ENCODE measurements at regions of chr3 and their contacts with region 1.

Region 1: GRCh38 chr3:71710906-71711494 is 14.2 kb downstream of the EIF4E3 start:
- DNase-seq: peak in 7 of 9 donors; percentile 32 to 57 (median 40)
- ATAC-seq: peak; percentile 81
- H3K4me3 ChIP-seq: no peak overlapping the region
- H3K4me3 Mint-ChIP-seq: peak overlapping the region in 5 of 10 donors; percentile 6 to 48 (median 32)
- H3K27ac ChIP-seq: no peak overlapping the region
- H3K27ac Mint-ChIP-seq: peak overlapping the region in 8 of 9 donors; percentile 4 to 80 (median 62)
- H3K4me1 ChIP-seq: peaks cover 19 to 29% of the 10 kb centered on the region in 2 donors
- H3K4me1 Mint-ChIP-seq: peaks cover 40 to 91% (median 53%) of the 10 kb centered on the region in 7 donors
- H3K27me3 ChIP-seq: no peaks in the 10 kb centered on the region
- H3K27me3 Mint-ChIP-seq: no peaks in the 10 kb centered on the region

Region 2: DNA sequence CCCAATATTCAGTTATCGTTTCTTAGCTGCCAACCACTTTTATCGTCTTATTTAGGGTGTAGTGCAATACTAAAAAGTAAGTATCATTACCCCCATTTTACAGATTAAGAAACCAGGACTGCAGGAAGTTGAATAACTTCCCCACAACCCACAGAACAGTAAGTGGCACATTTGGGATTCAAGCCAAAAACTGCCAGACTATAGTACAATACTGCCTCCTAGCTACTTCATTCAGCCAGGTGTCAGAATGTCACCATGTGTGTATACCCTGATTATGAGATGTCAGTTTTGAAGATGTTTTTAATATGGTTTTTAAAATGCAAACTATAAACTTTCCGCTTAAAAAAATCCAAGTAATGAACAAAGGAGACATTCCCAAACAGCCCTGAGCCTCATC is 148.1 kb after region 1 on chr3:
- CTCF ChIA-PET with region 1: interaction called, 3 read pairs
- POLR2A ChIA-PET with region 1: no interaction called
- intact Hi-C with region 1: loop called (anchors 1 kb)
- DNase-seq: peak in 5 of 9 donors; percentile 25 to 61 (median 47)
- ATAC-seq: peak; percentile 91
- H3K4me3 ChIP-seq: no peak overlapping the region
- H3K4me3 Mint-ChIP-seq: no peak overlapping the region
- H3K27ac ChIP-seq: no peak overlapping the region
- H3K27ac Mint-ChIP-seq: no peak overlapping the region
- H3K4me1 ChIP-seq: peaks cover 0 to 3% of the 10 kb centered on the region in 2 donors
- H3K4me1 Mint-ChIP-seq: peaks cover 0 to 8% (median 5%) of the 10 kb centered on the region in 7 donors
- H3K27me3 ChIP-seq: no peaks in the 10 kb centered on the region
- H3K27me3 Mint-ChIP-seq: peaks cover 22 to 32% (median 29%) of the 10 kb centered on the region in 5 donors

Region 3: DNA sequence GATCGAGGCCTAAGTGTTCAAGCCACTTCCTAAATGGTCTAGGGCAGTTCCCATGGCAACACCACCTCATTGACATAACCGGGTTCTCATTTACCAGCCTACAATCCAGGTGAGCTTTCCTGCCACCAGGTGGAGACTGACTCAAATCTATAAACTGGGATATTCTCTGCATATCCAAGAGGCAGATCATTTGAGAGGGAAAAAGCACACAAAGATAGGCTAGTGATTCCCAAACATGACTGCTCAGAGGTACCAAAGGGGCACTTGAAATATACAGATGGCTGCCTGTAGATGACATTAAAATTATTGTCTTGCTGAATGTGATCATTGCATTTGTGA is 215.2 kb after region 1 on chr3:
- CTCF ChIA-PET with region 1: no interaction called
- POLR2A ChIA-PET with region 1: no interaction called
- intact Hi-C with region 1: loop called in 1 of 2 experiments (anchors 5 kb)
- DNase-seq: peak in 4 of 9 donors; percentile 10 to 35 (median 15)
- ATAC-seq: no peak
- H3K4me3 ChIP-seq: no peak overlapping the region
- H3K4me3 Mint-ChIP-seq: no peak overlapping the region
- H3K27ac ChIP-seq: no peak overlapping the region
- H3K27ac Mint-ChIP-seq: peak overlapping the region in 1 of 9 donors; percentile 18
- H3K4me1 ChIP-seq: no peaks in the 10 kb centered on the region
- H3K4me1 Mint-ChIP-seq: peaks cover 0 to 5% (median 0%) of the 10 kb centered on the region in 7 donors
- H3K27me3 ChIP-seq: no peaks in the 10 kb centered on the region
- H3K27me3 Mint-ChIP-seq: peaks cover 0 to 4% (median 0%) of the 10 kb centered on the region in 5 donors

Region 4: DNA sequence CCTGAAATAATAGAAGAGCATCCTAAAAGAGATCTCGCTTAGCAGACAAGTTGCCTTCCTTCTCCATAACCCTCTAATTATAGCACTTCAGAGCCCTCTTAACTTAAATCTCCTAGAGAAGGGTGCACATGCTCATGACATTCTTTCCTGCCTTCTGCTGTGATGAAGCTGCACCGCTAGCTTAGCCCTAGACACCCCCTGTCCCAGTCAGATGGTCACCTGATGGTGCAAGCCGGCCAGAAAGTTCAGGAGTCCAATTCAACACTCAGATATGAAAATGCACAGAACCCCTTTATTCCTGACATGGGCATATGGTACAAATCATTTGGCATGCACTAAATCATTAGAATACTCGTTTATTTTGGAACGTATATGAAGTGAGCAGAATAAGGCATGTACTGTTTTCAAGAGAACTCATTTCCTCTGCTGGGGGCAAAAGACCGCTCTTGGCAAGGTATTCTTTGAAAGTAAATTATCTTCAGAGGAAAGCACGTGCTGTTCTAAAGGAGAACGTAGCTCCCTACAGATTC is 494.4 kb after region 1 on chr3:
- CTCF ChIA-PET with region 1: no interaction called
- POLR2A ChIA-PET with region 1: no interaction called
- intact Hi-C with region 1: no loop called
- DNase-seq: no peak
- ATAC-seq: no peak
- H3K4me3 ChIP-seq: no peak overlapping the region
- H3K4me3 Mint-ChIP-seq: no peak overlapping the region
- H3K27ac ChIP-seq: no peak overlapping the region
- H3K27ac Mint-ChIP-seq: no peak overlapping the region
- H3K4me1 ChIP-seq: no peaks in the 10 kb centered on the region
- H3K4me1 Mint-ChIP-seq: peaks cover 0 to 1% (median 0%) of the 10 kb centered on the region in 7 donors
- H3K27me3 ChIP-seq: no peaks in the 10 kb centered on the region
- H3K27me3 Mint-ChIP-seq: peaks cover 0 to 11% (median 5%) of the 10 kb centered on the region in 5 donors

Region 5: GRCh38 chr3:72255791-72256559 is 545.0 kb after region 1 on chr3:
- CTCF ChIA-PET with region 1: no interaction called
- POLR2A ChIA-PET with region 1: no interaction called
- intact Hi-C with region 1: loop called in 1 of 2 experiments (anchors 10 kb)
- DNase-seq: peak in 7 of 9 donors; percentile 33 to 63 (median 53)
- ATAC-seq: peak; percentile 80
- H3K4me3 ChIP-seq: no peak overlapping the region
- H3K4me3 Mint-ChIP-seq: peak overlapping the region in 9 of 10 donors; percentile 41 to 76 (median 68)
- H3K27ac ChIP-seq: no peak overlapping the region
- H3K27ac Mint-ChIP-seq: peak overlapping the region in 8 of 9 donors; percentile 32 to 90 (median 82)
- H3K4me1 ChIP-seq: peaks cover 0 to 45% of the 10 kb centered on the region in 2 donors
- H3K4me1 Mint-ChIP-seq: peaks cover 21 to 62% (median 53%) of the 10 kb centered on the region in 7 donors
- H3K27me3 ChIP-seq: no peaks in the 10 kb centered on the region
- H3K27me3 Mint-ChIP-seq: peaks cover 0 to 8% (median 0%) of the 10 kb centered on the region in 5 donors

Region 6: DNA sequence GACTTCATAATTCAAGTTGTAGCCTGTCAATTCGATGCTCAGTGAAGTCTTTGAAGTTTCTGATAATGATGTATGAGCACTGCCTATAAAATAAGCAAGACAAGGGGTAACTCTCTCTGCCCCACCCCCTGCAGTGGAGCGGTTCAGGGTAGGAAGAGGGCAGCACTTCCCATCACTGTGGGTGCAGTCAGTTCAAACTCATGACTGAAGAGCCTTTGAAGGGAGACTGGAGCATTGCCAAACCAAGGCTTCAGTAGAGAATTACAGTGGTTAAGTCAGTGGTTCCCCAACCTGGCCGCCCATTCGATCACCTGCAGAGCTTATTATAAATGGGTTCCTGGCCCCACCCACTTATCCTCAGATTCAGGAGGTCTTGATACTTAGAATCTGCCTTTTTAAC is 946.7 kb after region 1 on chr3:
- CTCF ChIA-PET with region 1: no interaction called
- POLR2A ChIA-PET with region 1: no interaction called
- intact Hi-C with region 1: loop called in 1 of 2 experiments (anchors 2 kb)
- DNase-seq: peak in 8 of 9 donors; percentile 19 to 86 (median 75)
- ATAC-seq: peak; percentile 96
- H3K4me3 ChIP-seq: no peak overlapping the region
- H3K4me3 Mint-ChIP-seq: peak overlapping the region in 6 of 10 donors; percentile 22 to 72 (median 41)
- H3K27ac ChIP-seq: no peak overlapping the region
- H3K27ac Mint-ChIP-seq: peak overlapping the region in 2 of 9 donors; percentile 1 to 6
- H3K4me1 ChIP-seq: peaks cover 0 to 9% of the 10 kb centered on the region in 2 donors
- H3K4me1 Mint-ChIP-seq: peaks cover 12 to 38% (median 19%) of the 10 kb centered on the region in 7 donors
- H3K27me3 ChIP-seq: no peaks in the 10 kb centered on the region
- H3K27me3 Mint-ChIP-seq: peaks cover 6 to 12% (median 7%) of the 10 kb centered on the region in 5 donors

Region 7: DNA sequence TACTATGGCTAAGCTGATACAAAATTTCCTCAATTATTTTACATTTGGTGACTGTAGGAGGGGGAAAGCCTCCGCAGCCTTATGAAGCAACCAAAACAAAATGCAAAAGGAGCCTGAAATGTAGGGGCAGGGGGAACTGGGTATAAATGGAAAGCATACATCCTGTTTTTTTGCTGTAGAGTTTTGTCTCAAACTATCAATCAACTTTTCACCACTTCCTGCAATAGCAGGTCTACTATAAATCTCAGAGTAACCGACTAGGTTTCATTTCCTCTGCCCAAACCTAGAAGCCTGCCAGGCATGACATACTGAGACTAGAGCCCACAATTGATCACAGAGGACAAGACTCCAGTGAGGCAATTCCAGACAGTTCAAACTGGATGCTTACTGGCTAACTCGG is 1045.9 kb after region 1 on chr3:
- CTCF ChIA-PET with region 1: no interaction called
- POLR2A ChIA-PET with region 1: no interaction called
- intact Hi-C with region 1: loop called in 1 of 2 experiments (anchors 5 kb)
- DNase-seq: peak in 8 of 9 donors; percentile 24 to 87 (median 83)
- ATAC-seq: peak; percentile 98
- H3K4me3 ChIP-seq: peak overlapping the region; percentile 37
- H3K4me3 Mint-ChIP-seq: peak overlapping the region; percentile 51 to 84 (median 76)
- H3K27ac ChIP-seq: peak overlapping the region; percentile 68
- H3K27ac Mint-ChIP-seq: peak overlapping the region; percentile 86 to 99 (median 97)
- H3K4me1 ChIP-seq: peaks cover 17 to 49% of the 10 kb centered on the region in 2 donors
- H3K4me1 Mint-ChIP-seq: peaks cover 28 to 89% (median 80%) of the 10 kb centered on the region in 7 donors
- H3K27me3 ChIP-seq: no peaks in the 10 kb centered on the region
- H3K27me3 Mint-ChIP-seq: no peaks in the 10 kb centered on the region

Region 8: DNA sequence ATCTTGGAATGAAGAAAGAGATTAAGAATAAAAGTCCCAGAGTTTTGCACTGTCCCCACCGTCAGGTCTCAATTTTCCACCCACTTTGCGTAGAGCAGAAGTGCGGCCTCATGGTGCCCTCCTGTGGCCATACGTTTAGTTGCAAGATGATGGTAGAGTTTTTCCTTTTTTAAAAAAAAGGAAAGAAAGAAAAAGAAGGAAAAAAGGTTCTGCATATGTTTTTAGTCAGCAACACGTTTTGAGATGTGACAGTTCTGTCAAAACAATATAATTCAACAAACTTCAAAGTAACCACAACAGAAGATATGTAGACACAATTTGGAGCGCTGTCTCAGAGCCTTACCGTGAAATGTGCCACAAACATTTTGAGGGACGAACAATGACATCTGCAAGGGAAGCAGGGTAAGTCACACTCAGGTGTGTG is 1375.1 kb after region 1 on chr3:
- CTCF ChIA-PET with region 1: no interaction called
- POLR2A ChIA-PET with region 1: no interaction called
- intact Hi-C with region 1: loop called in 1 of 2 experiments (anchors 1 kb)
- DNase-seq: peak; percentile 16 to 56 (median 43)
- ATAC-seq: peak; percentile 82
- H3K4me3 ChIP-seq: peak overlapping the region; percentile 11
- H3K4me3 Mint-ChIP-seq: peak overlapping the region in 8 of 10 donors; percentile 25 to 70 (median 57)
- H3K27ac ChIP-seq: no peak overlapping the region
- H3K27ac Mint-ChIP-seq: peak overlapping the region in 1 of 9 donors; percentile 42
- H3K4me1 ChIP-seq: peaks cover 0 to 8% of the 10 kb centered on the region in 2 donors
- H3K4me1 Mint-ChIP-seq: peaks cover 0 to 9% (median 7%) of the 10 kb centered on the region in 7 donors
- H3K27me3 ChIP-seq: no peaks in the 10 kb centered on the region
- H3K27me3 Mint-ChIP-seq: peaks cover 0 to 3% (median 0%) of the 10 kb centered on the region in 5 donors

Measured in naive thymus-derived CD4-positive, alpha-beta T cell (primary cell).